ENCODE measurements at regions of chr19 and their contacts with region 1.

Region 1: GRCh38 chr19:16095071-16095571 is 16.6 kb upstream of the RAB8A start:
- DNase-seq: peak; percentile 57
- ATAC-seq: peak; percentile 77
- H3K4me3 Mint-ChIP-seq: peak overlapping the region; percentile 10
- H3K27ac Mint-ChIP-seq: peak overlapping the region; percentile 87
- H3K4me1 Mint-ChIP-seq: peaks cover 32% of the 10 kb centered on the region
- H3K27me3 Mint-ChIP-seq: no peaks in the 10 kb centered on the region

Region 2: DNA sequence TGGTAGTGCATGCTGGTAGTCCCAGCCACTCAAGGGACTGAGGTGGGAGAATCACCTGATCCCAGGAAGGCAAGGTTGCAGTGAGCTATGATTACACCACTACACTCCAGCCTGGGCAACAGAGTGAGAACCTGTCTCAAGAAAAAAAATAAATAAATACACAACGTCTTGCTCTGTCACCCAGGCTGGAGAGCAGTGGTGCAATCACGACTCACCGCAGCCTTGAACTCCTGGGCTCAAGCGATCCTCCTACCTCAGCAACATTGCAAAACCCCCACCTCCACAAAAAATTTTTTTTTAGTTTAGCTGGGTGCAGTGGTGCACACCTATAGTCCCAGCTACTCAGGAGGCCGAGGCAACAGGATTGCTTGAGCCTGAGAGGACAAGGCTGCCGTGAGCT is 10.0 kb before region 1 on chr19:
- CTCF ChIA-PET with region 1: interaction called, 17 read pairs
- POLR2A ChIA-PET with region 1: interaction called, 10 read pairs
- intact Hi-C with region 1: no loop called
- DNase-seq: peak; percentile 48
- ATAC-seq: peak; percentile 23
- H3K4me3 Mint-ChIP-seq: peak overlapping the region; percentile 15
- H3K27ac Mint-ChIP-seq: peak overlapping the region; percentile 88
- H3K4me1 Mint-ChIP-seq: peaks cover 67% of the 10 kb centered on the region
- H3K27me3 Mint-ChIP-seq: no peaks in the 10 kb centered on the region

Region 3: GRCh38 chr19:16726916-16727315 is 631.8 kb after region 1 on chr19:
- CTCF ChIA-PET with region 1: no interaction called
- POLR2A ChIA-PET with region 1: no interaction called
- intact Hi-C with region 1: no loop called
- DNase-seq: no peak
- ATAC-seq: no peak
- H3K4me3 Mint-ChIP-seq: no peak overlapping the region
- H3K27ac Mint-ChIP-seq: no peak overlapping the region
- H3K4me1 Mint-ChIP-seq: no peaks in the 10 kb centered on the region
- H3K27me3 Mint-ChIP-seq: no peaks in the 10 kb centered on the region